ENCODE measurements at regions of chr13 and their contacts with region 1.

Region 1: GRCh38 chr13:33678906-33679657 is 138.9 kb upstream of the RFC3 start:
- DNase-seq: peak; percentile 53
- H3K4me3 Mint-ChIP-seq: peak overlapping the region; percentile 76
- H3K27ac Mint-ChIP-seq: peak overlapping the region; percentile 91
- H3K4me1 Mint-ChIP-seq: peaks cover 46% of the 10 kb centered on the region
- H3K27me3 Mint-ChIP-seq: no peaks in the 10 kb centered on the region

Region 2: GRCh38 chr13:33610471-33611015 is 68.5 kb before region 1 on chr13:
- intact Hi-C with region 1: loop called (anchors 1 kb)
- DNase-seq: peak; percentile 40
- H3K4me3 Mint-ChIP-seq: peak overlapping the region; percentile 70
- H3K27ac Mint-ChIP-seq: peak overlapping the region; percentile 95
- H3K4me1 Mint-ChIP-seq: peaks cover 50% of the 10 kb centered on the region
- H3K27me3 Mint-ChIP-seq: no peaks in the 10 kb centered on the region

Region 3: DNA sequence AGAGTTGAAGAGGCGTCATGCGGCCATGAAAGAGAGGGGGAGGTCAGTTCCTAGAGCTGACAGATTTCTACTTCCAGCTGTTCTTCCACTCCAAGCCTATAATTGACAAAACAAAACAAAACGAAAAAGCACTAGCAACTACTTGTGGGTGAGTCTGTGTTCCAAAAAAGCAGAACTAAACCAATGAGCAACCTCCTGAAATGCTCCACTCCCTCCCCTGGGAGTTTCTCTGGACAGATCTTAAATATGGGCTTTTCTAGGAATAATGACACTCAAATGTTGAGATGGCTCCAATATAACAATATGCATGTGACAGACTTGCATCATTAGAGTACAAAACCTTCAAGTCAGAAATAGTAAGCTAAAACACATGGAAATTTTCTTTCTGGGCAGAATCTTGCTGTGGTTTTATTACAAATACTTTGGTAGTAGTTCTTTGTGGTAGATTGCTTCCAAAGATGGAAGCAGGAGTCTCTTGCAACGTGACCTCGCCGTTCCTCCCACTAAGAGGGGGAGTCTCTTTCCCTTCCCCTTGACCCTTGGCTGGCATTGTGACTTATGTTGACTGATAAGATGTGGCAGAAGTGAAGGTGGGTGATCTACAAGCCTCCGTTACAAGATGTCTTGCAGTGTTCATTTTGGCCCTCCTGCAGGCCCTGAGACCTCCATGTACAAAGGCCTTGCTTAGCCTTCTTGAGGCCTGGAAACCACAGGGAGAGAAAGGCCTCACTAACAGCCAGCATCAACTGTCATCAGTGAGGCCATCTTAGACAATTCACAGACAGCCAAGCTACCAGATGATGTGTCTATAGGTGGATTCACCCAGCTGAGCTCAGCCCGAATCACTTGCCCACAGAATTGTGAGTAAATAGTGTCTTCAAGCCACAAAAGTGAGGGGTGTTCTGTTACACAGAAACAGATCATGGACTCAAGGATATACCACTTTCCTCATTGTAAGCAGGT is 34.2 kb before region 1 on chr13:
- intact Hi-C with region 1: loop called (anchors 1 kb)
- DNase-seq: no peak
- H3K4me3 Mint-ChIP-seq: no peak overlapping the region
- H3K27ac Mint-ChIP-seq: peak overlapping the region; percentile 86
- H3K4me1 Mint-ChIP-seq: peaks cover 38% of the 10 kb centered on the region
- H3K27me3 Mint-ChIP-seq: no peaks in the 10 kb centered on the region

Region 4: GRCh38 chr13:33690354-33690753 is 11.3 kb after region 1 on chr13:
- intact Hi-C with region 1: loop called (anchors 1 kb)
- DNase-seq: no peak
- H3K4me3 Mint-ChIP-seq: no peak overlapping the region
- H3K27ac Mint-ChIP-seq: peak overlapping the region; percentile 35
- H3K4me1 Mint-ChIP-seq: peaks cover 11% of the 10 kb centered on the region
- H3K27me3 Mint-ChIP-seq: no peaks in the 10 kb centered on the region

Region 5: DNA sequence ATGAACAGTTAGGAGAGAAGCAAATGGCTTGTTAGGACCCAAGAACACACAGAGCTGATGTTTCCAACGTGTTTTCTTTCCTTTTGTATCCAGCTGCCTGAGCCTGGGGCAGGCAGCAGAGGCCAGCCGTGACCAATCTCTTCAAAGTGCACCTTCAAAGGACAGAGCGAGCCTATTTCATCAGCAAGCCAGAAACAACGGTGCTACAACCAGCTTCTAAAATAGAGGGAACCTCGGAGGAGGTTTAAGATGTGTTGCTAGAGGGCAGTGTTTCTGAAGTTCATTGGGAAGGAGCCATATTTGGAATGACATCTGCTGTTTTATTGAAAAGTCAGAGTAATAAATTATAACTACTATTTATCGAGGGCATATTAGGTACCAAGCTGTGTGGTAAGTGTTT is 82.7 kb after region 1 on chr13:
- intact Hi-C with region 1: no loop called
- DNase-seq: no peak
- H3K4me3 Mint-ChIP-seq: no peak overlapping the region
- H3K27ac Mint-ChIP-seq: no peak overlapping the region
- H3K4me1 Mint-ChIP-seq: peaks cover 4% of the 10 kb centered on the region
- H3K27me3 Mint-ChIP-seq: peaks cover 5% of the 10 kb centered on the region

Region 6: GRCh38 chr13:33817901-33818706 is 139.0 kb after region 1 on chr13 and contains the start of gene RFC3:
- intact Hi-C with region 1: loop called (anchors 5 kb)
- DNase-seq: peak; percentile 90
- H3K4me3 Mint-ChIP-seq: peak within 1 kb of the TSS; percentile 99
- H3K27ac Mint-ChIP-seq: peak within 1 kb of the TSS; percentile 96
- H3K4me1 Mint-ChIP-seq: peaks cover 37% of the 10 kb centered on the region
- H3K27me3 Mint-ChIP-seq: peaks cover 3% of the 10 kb centered on the region
- total RNA-seq, gene RFC3: 55.2 and 55.4 TPM in 2 replicates